ENCODE measurements at regions of chr11 and their contacts with region 1.

Region 1: GRCh38 chr11:20387241-20388095 is at the start of gene PRMT3:
- DNase-seq: peak; percentile 97
- H3K4me3 Mint-ChIP-seq: peak within 1 kb of the TSS; percentile 98
- H3K27ac Mint-ChIP-seq: peak within 1 kb of the TSS; percentile 98
- H3K4me1 Mint-ChIP-seq: peaks cover 12% of the 10 kb centered on the region
- H3K27me3 Mint-ChIP-seq: no peaks in the 10 kb centered on the region
- total RNA-seq, gene PRMT3: 43.7 and 45.5 TPM in 2 replicates

Region 2: GRCh38 chr11:18395735-18396504 is 1991.5 kb before region 1 on chr11:
- intact Hi-C with region 1: loop called (anchors 10 kb)
- DNase-seq: peak; percentile 96
- H3K4me3 Mint-ChIP-seq: peak overlapping the region; percentile 99
- H3K27ac Mint-ChIP-seq: peak overlapping the region; percentile 98
- H3K4me1 Mint-ChIP-seq: peaks cover 67% of the 10 kb centered on the region
- H3K27me3 Mint-ChIP-seq: no peaks in the 10 kb centered on the region

Region 3: DNA sequence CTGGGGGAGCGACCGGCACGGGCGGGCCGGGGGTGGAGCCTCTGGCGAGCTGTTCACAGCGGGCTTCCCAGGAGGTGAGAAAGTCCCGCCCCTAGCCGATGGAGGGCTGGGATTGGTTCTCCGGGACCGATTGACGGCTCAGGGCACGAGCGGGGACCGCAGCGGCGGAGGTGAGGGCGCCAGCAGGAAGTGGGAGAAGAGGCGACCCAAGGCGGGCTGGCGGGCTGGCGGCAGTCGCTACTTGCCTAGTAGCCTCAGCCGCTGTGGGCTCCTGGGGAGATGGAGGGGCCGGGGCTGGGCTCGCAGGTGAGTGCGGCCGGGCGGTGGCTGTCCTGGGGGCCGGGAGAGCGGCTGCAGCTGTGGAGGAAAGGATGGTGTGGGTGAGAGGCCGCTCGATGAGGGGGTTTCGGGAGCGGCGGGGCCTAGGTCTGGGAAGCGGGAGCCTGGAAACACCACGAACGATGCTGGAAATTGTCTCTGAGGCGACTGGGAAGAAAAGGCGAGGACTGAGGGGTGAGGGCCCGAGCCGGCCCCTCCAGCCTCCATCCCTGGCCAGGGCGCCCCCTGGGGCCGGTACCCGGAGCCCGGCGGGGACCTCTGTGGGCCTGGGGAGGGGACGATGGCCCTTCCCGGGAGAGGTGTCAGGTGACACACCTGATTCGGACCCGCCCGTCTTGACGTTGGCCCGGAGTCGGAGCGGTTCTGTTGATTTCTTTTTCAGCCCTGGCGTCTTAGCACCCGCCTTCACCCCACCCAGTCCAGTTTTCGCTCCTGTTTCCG is 1270.3 kb before region 1 on chr11 and contains the start of gene ZDHHC13:
- intact Hi-C with region 1: loop called (anchors 5 kb)
- DNase-seq: peak; percentile 94
- H3K4me3 Mint-ChIP-seq: peak within 1 kb of the TSS; percentile 93
- H3K27ac Mint-ChIP-seq: peak within 1 kb of the TSS; percentile 84
- H3K4me1 Mint-ChIP-seq: peaks cover 54% of the 10 kb centered on the region
- H3K27me3 Mint-ChIP-seq: peaks cover 12% of the 10 kb centered on the region
- total RNA-seq, gene ZDHHC13: 25.0 and 28.9 TPM in 2 replicates

Region 4: DNA sequence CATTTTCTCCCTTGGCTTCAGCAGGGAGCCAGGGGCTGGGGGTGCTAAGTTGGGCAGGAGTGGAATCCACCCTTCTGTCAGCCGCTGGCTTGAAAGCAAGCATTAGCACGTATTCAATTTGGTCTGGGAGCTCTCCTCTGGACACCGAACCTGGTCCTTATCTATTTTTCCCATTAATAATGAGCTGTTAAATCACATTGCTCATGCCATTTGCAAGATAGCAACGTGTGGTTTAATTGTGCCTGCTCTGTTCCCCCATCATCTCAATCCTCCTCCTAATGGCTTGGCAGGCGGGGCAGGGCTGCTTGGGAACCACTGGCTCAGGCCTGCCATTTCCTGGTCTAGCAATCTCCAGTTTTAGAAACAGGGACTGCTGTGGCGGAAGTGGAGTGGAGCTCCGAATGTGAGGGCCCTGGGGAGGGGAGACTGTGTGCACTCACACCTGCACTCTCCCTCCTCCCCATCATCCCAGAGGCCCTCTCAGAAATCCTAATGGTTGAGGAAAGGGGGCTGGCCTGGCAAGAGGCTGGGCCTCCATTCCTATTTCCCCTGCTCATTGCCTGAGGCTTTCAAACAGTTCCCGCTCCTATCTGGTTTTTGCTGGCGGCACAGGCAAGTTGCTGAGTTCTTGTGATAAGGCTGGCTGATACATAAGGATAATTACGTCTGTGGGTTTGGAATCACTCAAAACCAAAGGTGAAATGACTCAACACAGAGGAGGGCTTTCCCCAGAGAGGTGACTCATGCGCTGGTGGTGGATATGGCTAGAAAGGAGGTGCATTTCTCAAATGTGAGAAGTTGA is 945.5 kb before region 1 on chr11:
- intact Hi-C with region 1: loop called (anchors 1 kb)
- DNase-seq: peak; percentile 41
- H3K4me3 Mint-ChIP-seq: no peak overlapping the region
- H3K27ac Mint-ChIP-seq: peak overlapping the region; percentile 18
- H3K4me1 Mint-ChIP-seq: peaks cover 24% of the 10 kb centered on the region
- H3K27me3 Mint-ChIP-seq: peaks cover 46% of the 10 kb centered on the region

Region 5: GRCh38 chr11:20363500-20364411 is 23.7 kb before region 1 on chr11 and contains the start of gene HTATIP2:
- intact Hi-C with region 1: loop called (anchors 1 kb)
- DNase-seq: peak; percentile 67
- H3K4me3 Mint-ChIP-seq: peak within 1 kb of the TSS; percentile 90
- H3K27ac Mint-ChIP-seq: peak within 1 kb of the TSS; percentile 92
- H3K4me1 Mint-ChIP-seq: peaks cover 68% of the 10 kb centered on the region
- H3K27me3 Mint-ChIP-seq: no peaks in the 10 kb centered on the region
- total RNA-seq, gene HTATIP2: 40.8 and 43.9 TPM in 2 replicates

Region 6: DNA sequence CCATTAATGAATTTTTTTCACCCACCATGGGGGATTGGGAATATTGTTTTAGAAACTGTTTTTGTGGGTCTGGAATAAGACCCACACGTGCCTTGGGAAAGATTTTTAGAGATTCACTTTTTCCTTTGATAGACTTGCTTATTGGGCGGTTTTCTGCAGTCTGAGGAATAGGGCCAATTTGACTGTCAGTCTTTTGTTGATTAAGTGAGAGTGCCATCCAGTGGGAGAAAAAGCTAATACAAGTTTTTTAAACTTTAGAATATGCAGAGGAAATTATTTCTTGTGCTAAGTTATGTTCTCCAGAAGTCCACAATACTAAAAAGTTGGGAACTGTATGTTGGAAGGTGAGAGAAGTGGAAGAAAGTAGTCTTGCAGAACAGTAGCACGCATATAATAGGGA is 56.1 kb after region 1 on chr11:
- intact Hi-C with region 1: loop called (anchors 1 kb)
- DNase-seq: no peak
- H3K4me3 Mint-ChIP-seq: no peak overlapping the region
- H3K27ac Mint-ChIP-seq: no peak overlapping the region
- H3K4me1 Mint-ChIP-seq: no peaks in the 10 kb centered on the region
- H3K27me3 Mint-ChIP-seq: no peaks in the 10 kb centered on the region

Region 7: GRCh38 chr11:20609727-20610707 is 222.5 kb after region 1 on chr11:
- intact Hi-C with region 1: loop called (anchors 1 kb)
- DNase-seq: peak; percentile 48
- H3K4me3 Mint-ChIP-seq: peak overlapping the region; percentile 66
- H3K27ac Mint-ChIP-seq: no peak overlapping the region
- H3K4me1 Mint-ChIP-seq: peaks cover 9% of the 10 kb centered on the region
- H3K27me3 Mint-ChIP-seq: peaks cover 64% of the 10 kb centered on the region

Measured in activated T-helper 1 cell treated with anti-CD3 and anti-CD28 coated beads, Interleukin-12 subunit alpha, Interleukin-12 subunit beta, Interleukin-2, Interleukin-4 antibody, amounts not matched to agents 30 ng/mL and 10 ng/mL and 1 ng/mL, durations not matched to agents 14 hours and 24 hours and 36 hours (primary cell).